ENCODE measurements at regions of chr4 and their contacts with region 1.

Region 1: GRCh38 chr4:15231265-15232091 is 196.4 kb upstream of the C1QTNF7 start:
- DNase-seq: peak; percentile 53
- H3K4me3 Mint-ChIP-seq: no peak overlapping the region
- H3K27ac Mint-ChIP-seq: no peak overlapping the region
- H3K4me1 Mint-ChIP-seq: peaks cover 28% of the 10 kb centered on the region
- H3K27me3 Mint-ChIP-seq: no peaks in the 10 kb centered on the region

Region 2: GRCh38 chr4:15396157-15396800 is 164.8 kb after region 1 on chr4:
- intact Hi-C with region 1: loop called (anchors 1 kb)
- DNase-seq: peak; percentile 32
- H3K4me3 Mint-ChIP-seq: no peak overlapping the region
- H3K27ac Mint-ChIP-seq: no peak overlapping the region
- H3K4me1 Mint-ChIP-seq: peaks cover 9% of the 10 kb centered on the region
- H3K27me3 Mint-ChIP-seq: no peaks in the 10 kb centered on the region

Region 3: GRCh38 chr4:15457406-15458201 is 226.1 kb after region 1 on chr4:
- intact Hi-C with region 1: loop called (anchors 1 kb)
- DNase-seq: no peak
- H3K4me3 Mint-ChIP-seq: no peak overlapping the region
- H3K27ac Mint-ChIP-seq: no peak overlapping the region
- H3K4me1 Mint-ChIP-seq: no peaks in the 10 kb centered on the region
- H3K27me3 Mint-ChIP-seq: peaks cover 7% of the 10 kb centered on the region

Region 4: GRCh38 chr4:15649914-15650545 is 418.6 kb after region 1 on chr4:
- intact Hi-C with region 1: loop called (anchors 1 kb)
- DNase-seq: peak; percentile 60
- H3K4me3 Mint-ChIP-seq: peak overlapping the region; percentile 13
- H3K27ac Mint-ChIP-seq: peak overlapping the region; percentile 42
- H3K4me1 Mint-ChIP-seq: peaks cover 59% of the 10 kb centered on the region
- H3K27me3 Mint-ChIP-seq: no peaks in the 10 kb centered on the region

Region 5: DNA sequence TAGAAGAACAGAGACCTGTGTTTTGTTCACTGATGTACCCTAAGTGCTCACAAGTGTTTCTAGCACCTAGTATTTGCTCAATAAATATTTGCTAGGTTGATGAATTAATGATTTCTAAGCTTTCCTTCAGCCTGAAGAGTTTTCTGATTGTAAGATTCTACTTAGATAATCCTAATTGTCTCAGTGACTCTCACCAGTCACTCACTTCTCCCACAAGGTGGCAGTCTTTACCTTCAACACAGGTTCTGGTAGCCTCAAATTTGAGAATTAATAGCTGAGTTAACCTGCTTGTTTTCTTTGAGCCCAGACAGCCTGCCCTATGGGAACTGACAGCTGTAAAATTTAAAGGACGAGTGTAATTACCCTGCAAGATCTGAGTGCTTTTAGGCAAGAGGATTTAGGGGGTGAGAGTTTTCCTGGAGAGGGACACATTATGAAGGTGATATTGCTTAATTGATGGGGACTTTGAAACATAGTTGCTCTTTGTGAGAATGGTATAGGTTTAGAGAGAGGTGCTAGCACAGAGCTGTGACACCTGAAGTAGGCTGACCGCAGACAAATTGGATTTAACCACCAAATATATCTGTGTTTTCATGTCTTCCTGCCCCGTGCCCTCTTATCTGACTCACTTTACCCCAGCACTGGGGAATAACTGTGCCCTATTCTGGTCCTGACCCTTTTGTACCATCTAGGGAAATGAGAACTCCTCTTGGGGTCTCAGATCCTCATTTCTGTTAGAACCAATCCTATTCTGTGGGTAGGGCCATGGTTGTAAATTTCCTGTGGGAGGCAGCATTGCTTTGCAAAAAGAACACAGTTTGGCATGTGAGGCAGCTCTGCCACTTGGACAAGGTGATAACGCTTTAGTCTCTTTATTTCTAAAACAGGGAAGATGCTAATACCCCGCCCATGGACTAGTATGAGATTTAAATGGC is 574.4 kb after region 1 on chr4:
- intact Hi-C with region 1: loop called (anchors 10 kb)
- DNase-seq: no peak
- H3K4me3 Mint-ChIP-seq: no peak overlapping the region
- H3K27ac Mint-ChIP-seq: no peak overlapping the region
- H3K4me1 Mint-ChIP-seq: peaks cover 74% of the 10 kb centered on the region
- H3K27me3 Mint-ChIP-seq: no peaks in the 10 kb centered on the region

Region 6: DNA sequence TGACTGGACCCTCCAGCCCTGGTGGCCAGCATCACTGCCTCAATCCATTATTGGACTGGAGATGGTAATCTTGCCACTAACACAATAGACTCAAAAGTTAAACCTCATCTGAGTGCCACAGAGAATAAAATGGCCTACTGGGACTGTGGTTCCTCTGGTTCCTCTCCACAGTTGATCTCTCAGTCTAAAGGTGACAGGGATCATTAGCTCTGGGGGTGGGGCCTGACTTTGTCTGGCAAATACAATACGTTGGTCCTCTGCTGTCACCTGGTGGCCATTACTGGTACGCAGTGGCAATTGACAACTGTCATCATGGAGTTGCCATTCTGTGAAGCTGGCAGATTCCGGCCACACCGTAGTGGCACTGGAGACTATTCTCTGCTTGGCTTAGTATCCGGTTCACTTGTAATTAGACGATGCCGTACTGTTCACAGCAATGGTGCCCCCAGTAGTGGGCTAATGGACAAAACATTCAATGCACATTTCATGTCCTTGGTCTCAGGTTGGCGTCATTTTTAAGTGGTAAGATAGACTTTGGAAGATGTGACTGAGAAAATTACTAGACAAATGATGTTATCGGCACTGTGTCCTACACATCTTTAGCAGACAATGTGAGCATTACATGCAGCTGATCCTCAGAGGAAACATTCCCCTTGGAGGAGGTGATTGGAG is 724.8 kb after region 1 on chr4:
- intact Hi-C with region 1: loop called (anchors 1 kb)
- DNase-seq: peak; percentile 61
- H3K4me3 Mint-ChIP-seq: no peak overlapping the region
- H3K27ac Mint-ChIP-seq: no peak overlapping the region
- H3K4me1 Mint-ChIP-seq: peaks cover 6% of the 10 kb centered on the region
- H3K27me3 Mint-ChIP-seq: peaks cover 11% of the 10 kb centered on the region

Region 7: DNA sequence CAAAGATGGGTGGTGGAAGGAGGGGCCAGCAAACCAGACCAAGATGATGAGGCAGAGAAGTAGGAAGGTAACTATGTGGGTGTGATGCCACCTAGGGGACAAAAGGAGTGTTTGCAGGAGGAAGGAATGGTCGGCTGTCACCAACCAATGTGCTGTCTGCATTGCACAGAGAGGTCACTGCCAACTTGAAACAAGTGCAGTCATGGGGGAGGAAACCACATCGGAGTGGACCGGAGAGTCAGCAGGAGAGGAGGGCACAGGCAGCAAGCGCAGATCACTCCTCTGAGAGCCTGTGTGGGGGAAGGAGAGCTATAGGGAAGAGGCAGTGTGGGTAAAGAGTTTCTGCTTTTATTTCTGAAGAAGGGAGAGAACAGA is 770.0 kb after region 1 on chr4:
- intact Hi-C with region 1: loop called (anchors 1 kb)
- DNase-seq: peak; percentile 27
- H3K4me3 Mint-ChIP-seq: no peak overlapping the region
- H3K27ac Mint-ChIP-seq: no peak overlapping the region
- H3K4me1 Mint-ChIP-seq: no peaks in the 10 kb centered on the region
- H3K27me3 Mint-ChIP-seq: peaks cover 11% of the 10 kb centered on the region